CD4-positive, alpha-beta memory T cell (primary cell): ENCODE measurements at regions of chr2 and their contacts with region 1.

Region 1: DNA sequence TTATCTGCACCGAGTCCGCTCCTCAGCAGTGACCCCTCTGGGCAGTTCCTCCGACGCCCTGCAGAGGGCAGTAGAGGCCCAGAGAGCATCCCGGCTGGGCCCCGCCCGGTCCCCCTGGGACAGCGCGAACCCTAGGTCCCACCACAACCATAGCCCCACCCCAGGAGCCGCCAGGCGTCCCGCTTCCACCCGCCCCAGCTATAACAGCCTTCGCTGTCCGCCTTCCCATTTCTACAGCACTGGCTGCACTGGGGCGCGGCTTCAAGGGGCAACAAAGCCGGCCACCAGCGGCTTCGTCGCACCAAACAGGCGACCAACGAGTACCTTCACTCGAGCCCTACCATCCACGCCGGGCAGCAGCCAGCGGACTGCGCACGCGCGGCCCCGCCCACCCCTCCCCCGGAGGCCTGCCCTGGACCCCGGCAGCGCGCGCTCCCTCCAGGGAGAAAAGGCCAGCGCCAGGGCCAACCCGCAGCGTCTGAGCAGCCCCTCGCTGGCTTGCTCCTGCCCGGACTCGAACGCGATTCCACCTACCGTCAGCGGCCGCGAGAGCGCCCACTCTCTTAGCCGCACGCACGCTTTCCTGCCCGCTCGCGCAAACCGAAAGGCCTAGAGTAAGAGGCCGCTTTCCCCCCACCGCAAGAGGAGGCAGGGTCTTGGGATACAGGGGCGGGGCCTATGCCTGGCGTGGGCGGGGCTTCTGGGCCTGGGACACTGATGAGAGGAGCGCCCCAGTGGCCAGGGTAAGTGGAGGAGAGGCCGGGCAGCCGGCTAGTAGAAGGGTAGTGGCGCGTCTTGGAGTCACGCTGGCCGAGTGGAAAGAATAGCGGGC is at the start of gene NHEJ1:
- DNase-seq: peak; percentile 90 to 97 (median 93)
- H3K4me3 ChIP-seq: peak within 1 kb of the TSS in 1 of 2 donors; percentile 70
- H3K4me3 Mint-ChIP-seq: peak within 1 kb of the TSS; percentile 89 to 98 (median 94)
- H3K27ac ChIP-seq: peak within 1 kb of the TSS; percentile 71
- H3K27ac Mint-ChIP-seq: peak within 1 kb of the TSS; percentile 88 to 99 (median 95)
- H3K4me1 ChIP-seq: peaks cover 12% of the 10 kb centered on the region
- H3K4me1 Mint-ChIP-seq: peaks cover 14 to 21% (median 18%) of the 10 kb centered on the region in 4 donors
- H3K27me3 ChIP-seq: no peaks in the 10 kb centered on the region
- H3K27me3 Mint-ChIP-seq: no peaks in the 10 kb centered on the region
- total RNA-seq, gene NHEJ1: 14.1 to 15.5 TPM

Region 2: DNA sequence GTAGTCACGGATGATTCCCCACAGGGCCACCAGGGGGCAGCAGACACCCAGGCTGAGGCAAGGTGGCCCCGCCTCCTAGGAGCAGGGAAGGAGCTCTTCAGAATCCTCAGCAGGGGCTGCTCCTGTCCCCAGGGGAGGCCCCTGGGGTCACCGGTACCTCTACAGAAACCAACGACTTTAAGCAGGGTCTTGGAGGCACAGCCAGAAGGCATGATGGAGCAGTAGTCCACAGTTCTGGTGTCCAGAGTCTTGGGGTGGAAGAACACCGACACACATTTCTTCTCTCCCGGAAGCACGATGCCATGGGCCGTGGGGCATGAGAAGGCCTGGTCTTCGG is 130.6 kb before region 1 on chr2:
- CTCF ChIA-PET with region 1: interaction called, 62 read pairs
- POLR2A ChIA-PET with region 1: no interaction called
- intact Hi-C with region 1: loop called (anchors 1 kb)
- DNase-seq: peak; percentile 69 to 76 (median 73)
- H3K4me3 ChIP-seq: no peak overlapping the region
- H3K4me3 Mint-ChIP-seq: no peak overlapping the region
- H3K27ac ChIP-seq: no peak overlapping the region
- H3K27ac Mint-ChIP-seq: peak overlapping the region in 1 of 7 donors; percentile 21
- H3K4me1 ChIP-seq: no peaks in the 10 kb centered on the region
- H3K4me1 Mint-ChIP-seq: peaks cover 0 to 1% (median 0%) of the 10 kb centered on the region in 4 donors
- H3K27me3 ChIP-seq: no peaks in the 10 kb centered on the region
- H3K27me3 Mint-ChIP-seq: peaks cover 16 to 21% of the 10 kb centered on the region in 2 donors

Region 3: DNA sequence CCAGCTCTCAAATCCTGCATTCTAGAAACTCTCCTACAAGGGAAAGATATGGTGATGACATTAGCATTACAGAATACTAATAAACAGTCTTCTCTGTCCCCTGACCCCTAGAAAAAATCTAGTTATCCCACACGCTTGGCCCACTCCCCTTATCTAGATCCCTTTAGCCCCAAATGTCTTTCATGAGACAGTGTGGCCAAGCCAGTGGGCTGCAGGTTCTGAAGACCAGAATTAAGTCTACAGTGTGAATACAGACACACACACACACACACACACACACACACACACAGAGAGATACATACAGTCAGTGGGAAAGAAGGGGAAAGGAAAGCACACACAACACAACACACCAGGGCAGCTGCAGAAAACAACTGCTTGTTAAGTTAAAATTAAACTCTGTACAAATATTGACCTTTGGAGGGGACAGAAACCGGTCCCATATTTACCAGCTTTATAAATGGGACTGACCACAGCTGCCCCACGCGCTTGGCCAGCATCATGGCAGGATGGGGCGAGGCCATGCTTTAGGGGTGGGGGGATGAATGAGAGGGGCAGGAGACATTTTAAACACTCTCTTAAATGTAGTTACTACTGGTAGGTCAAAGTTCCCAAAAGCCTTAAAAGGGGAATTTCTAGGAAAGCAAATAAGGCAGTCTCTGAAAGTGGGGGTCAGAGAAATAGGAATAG is 48.9 kb before region 1 on chr2:
- CTCF ChIA-PET with region 1: no interaction called
- POLR2A ChIA-PET with region 1: no interaction called
- intact Hi-C with region 1: no loop called
- DNase-seq: no peak
- H3K4me3 ChIP-seq: no peak overlapping the region
- H3K4me3 Mint-ChIP-seq: no peak overlapping the region
- H3K27ac ChIP-seq: no peak overlapping the region
- H3K27ac Mint-ChIP-seq: no peak overlapping the region
- H3K4me1 ChIP-seq: no peaks in the 10 kb centered on the region
- H3K4me1 Mint-ChIP-seq: peaks cover 6 to 16% (median 11%) of the 10 kb centered on the region in 4 donors
- H3K27me3 ChIP-seq: no peaks in the 10 kb centered on the region
- H3K27me3 Mint-ChIP-seq: no peaks in the 10 kb centered on the region

Region 4: DNA sequence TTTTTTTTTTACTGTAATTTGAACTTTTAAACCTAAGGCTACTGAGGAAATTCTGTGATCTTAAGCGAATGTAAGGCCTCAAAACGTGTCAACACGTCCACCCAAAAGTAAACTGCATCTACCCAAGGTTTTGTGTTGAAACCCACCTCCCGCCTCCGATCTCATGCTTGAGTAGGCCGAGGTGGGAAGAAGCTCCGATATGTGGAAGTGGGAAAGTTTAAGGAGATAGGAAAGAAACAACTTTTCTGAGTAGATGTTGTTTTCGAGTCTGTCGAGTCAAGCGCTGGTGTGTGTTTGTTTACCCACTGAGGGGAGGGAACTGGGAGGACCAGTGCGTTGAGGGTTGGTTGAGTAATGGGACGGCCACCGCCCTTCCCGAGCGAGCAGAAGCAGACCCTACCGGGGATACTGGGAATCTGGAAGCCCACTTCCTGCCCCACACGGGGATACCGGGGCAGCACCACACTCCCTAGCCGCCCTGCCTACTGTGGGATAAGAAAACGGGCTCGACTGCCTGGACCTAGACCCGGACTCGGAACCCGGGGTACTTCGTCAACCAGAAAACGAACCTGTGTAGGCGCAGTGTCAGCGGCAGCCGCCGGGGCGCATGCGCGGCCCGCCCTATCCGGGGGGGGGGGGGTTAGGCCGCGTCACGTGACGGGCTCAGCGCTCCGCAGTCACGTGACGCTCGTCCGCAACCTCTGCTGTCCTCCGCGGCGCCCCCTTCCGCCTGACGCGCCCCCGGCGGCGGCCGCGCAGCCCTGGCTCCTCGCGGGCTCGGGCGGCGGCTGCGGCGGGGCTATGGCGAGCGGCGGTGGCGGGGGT is 17.4 kb after region 1 on chr2 and contains the start of gene RETREG2:
- CTCF ChIA-PET with region 1: interaction called, 89 read pairs
- POLR2A ChIA-PET with region 1: interaction called, 123 read pairs
- intact Hi-C with region 1: loop called (anchors 1 kb)
- DNase-seq: peak; percentile 88 to 91 (median 88)
- H3K4me3 ChIP-seq: peak within 1 kb of the TSS; percentile 81 to 96
- H3K4me3 Mint-ChIP-seq: peak within 1 kb of the TSS; percentile 91 to 98 (median 95)
- H3K27ac ChIP-seq: peak within 1 kb of the TSS; percentile 91
- H3K27ac Mint-ChIP-seq: peak within 1 kb of the TSS; percentile 96 to 99 (median 98)
- H3K4me1 ChIP-seq: peaks cover 66% of the 10 kb centered on the region
- H3K4me1 Mint-ChIP-seq: peaks cover 34 to 79% (median 62%) of the 10 kb centered on the region in 4 donors
- H3K27me3 ChIP-seq: no peaks in the 10 kb centered on the region
- H3K27me3 Mint-ChIP-seq: no peaks in the 10 kb centered on the region
- total RNA-seq, gene RETREG2: 123 to 128 TPM

Region 5: GRCh38 chr2:219229305-219230058 is 69.1 kb after region 1 on chr2 and contains the starts of genes ANKZF1 and ATG9A:
- CTCF ChIA-PET with region 1: interaction called, 9 read pairs
- POLR2A ChIA-PET with region 1: interaction called, 9 read pairs
- intact Hi-C with region 1: loop called (anchors 1 kb)
- DNase-seq: peak; percentile 98 to 100 (median 99)
- H3K4me3 ChIP-seq: peak within 1 kb of the TSS; percentile 63 to 69
- H3K4me3 Mint-ChIP-seq: peak within 1 kb of the TSS; percentile 94 to 99 (median 96)
- H3K27ac ChIP-seq: peak within 1 kb of the TSS; percentile 87
- H3K27ac Mint-ChIP-seq: peak within 1 kb of the TSS; percentile 94 to 98 (median 96)
- H3K4me1 ChIP-seq: peaks cover 49% of the 10 kb centered on the region
- H3K4me1 Mint-ChIP-seq: peaks cover 28 to 82% (median 51%) of the 10 kb centered on the region in 4 donors
- H3K27me3 ChIP-seq: no peaks in the 10 kb centered on the region
- H3K27me3 Mint-ChIP-seq: no peaks in the 10 kb centered on the region
- total RNA-seq, gene ANKZF1: 244 to 260 TPM
- total RNA-seq, gene ATG9A: 48.7 to 53.0 TPM

Region 6: GRCh38 chr2:219261024-219261855 is 100.8 kb after region 1 on chr2:
- CTCF ChIA-PET with region 1: no interaction called
- POLR2A ChIA-PET with region 1: no interaction called
- intact Hi-C with region 1: no loop called
- DNase-seq: no peak
- H3K4me3 ChIP-seq: no peak overlapping the region
- H3K4me3 Mint-ChIP-seq: no peak overlapping the region
- H3K27ac ChIP-seq: no peak overlapping the region
- H3K27ac Mint-ChIP-seq: no peak overlapping the region
- H3K4me1 ChIP-seq: no peaks in the 10 kb centered on the region
- H3K4me1 Mint-ChIP-seq: peaks cover 0 to 2% (median 2%) of the 10 kb centered on the region in 4 donors
- H3K27me3 ChIP-seq: no peaks in the 10 kb centered on the region
- H3K27me3 Mint-ChIP-seq: peaks cover 1 to 6% of the 10 kb centered on the region in 2 donors

Region 7: DNA sequence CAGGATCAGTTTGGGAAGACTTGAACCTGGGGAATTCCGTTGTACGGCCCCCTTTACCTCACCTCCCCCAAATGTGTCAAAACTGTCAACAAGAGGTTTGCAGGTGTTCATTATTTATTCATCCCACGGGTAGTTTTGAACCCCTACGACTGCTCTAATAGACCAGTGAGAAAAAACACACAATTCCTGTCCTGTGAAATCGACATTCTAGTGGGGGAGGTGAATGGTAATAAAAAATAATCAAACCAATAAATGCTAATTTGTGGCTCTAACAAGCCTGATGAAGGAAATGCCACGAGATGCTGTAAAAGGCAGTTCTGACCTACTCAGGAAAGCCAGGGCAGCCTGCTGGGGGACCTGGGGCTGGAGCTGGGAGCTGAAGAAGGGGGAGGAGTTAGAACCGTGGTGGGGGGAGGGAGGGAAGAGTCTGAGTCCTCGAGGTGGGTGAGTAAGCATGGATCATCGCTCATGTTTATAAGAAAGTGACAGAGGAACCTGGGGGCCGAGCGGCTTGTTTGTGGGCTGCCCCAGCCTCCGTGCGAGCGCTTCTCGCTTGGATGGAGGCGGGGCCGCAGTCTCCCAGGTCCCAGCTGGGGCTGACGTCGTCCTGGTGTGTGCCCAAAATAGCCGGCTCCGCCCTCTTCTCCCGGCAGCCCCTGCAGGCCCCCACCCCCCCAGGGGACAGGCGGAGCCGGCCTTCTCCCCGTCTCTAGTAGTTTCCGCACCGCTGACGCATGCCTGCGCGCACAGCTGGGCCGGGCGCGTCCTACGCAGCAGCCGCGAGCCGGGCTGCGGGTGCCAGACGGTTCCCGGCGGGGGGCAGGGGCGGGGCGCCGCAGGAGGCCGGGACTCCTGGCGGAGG is 118.5 kb after region 1 on chr2 and contains the start of gene DNAJB2:
- CTCF ChIA-PET with region 1: interaction called, 8 read pairs
- POLR2A ChIA-PET with region 1: interaction called, 4 read pairs
- intact Hi-C with region 1: loop called (anchors 1 kb)
- DNase-seq: peak; percentile 98 to 100 (median 99)
- H3K4me3 ChIP-seq: peak within 1 kb of the TSS; percentile 48 to 71
- H3K4me3 Mint-ChIP-seq: peak within 1 kb of the TSS; percentile 88 to 98 (median 96)
- H3K27ac ChIP-seq: peak within 1 kb of the TSS; percentile 98
- H3K27ac Mint-ChIP-seq: peak within 1 kb of the TSS; percentile 96 to 100 (median 100)
- H3K4me1 ChIP-seq: peaks cover 40% of the 10 kb centered on the region
- H3K4me1 Mint-ChIP-seq: peaks cover 17 to 51% (median 40%) of the 10 kb centered on the region in 4 donors
- H3K27me3 ChIP-seq: no peaks in the 10 kb centered on the region
- H3K27me3 Mint-ChIP-seq: no peaks in the 10 kb centered on the region
- total RNA-seq, gene DNAJB2: 110 to 117 TPM

Region 8: GRCh38 chr2:219530048-219530963 is 369.9 kb after region 1 on chr2:
- CTCF ChIA-PET with region 1: no interaction called
- POLR2A ChIA-PET with region 1: interaction called, 3 read pairs
- intact Hi-C with region 1: loop called (anchors 1 kb)
- DNase-seq: peak; percentile 79 to 84 (median 81)
- H3K4me3 ChIP-seq: no peak overlapping the region
- H3K4me3 Mint-ChIP-seq: no peak overlapping the region
- H3K27ac ChIP-seq: no peak overlapping the region
- H3K27ac Mint-ChIP-seq: peak overlapping the region in 1 of 7 donors; percentile 41
- H3K4me1 ChIP-seq: no peaks in the 10 kb centered on the region
- H3K4me1 Mint-ChIP-seq: peaks cover 0 to 7% (median 0%) of the 10 kb centered on the region in 4 donors
- H3K27me3 ChIP-seq: peaks cover 26% of the 10 kb centered on the region
- H3K27me3 Mint-ChIP-seq: peaks cover 53 to 66% of the 10 kb centered on the region in 2 donors